ENCODE measurements at regions of chr3 and their contacts with region 1.

Region 1: GRCh38 chr3:4834403-4834866 is 144.8 kb upstream of the BHLHE40 start:
- DNase-seq: peak; percentile 72
- ATAC-seq: peak; percentile 57
- H3K4me3 Mint-ChIP-seq: peak overlapping the region; percentile 81
- H3K27ac Mint-ChIP-seq: peak overlapping the region; percentile 96
- H3K4me1 Mint-ChIP-seq: peaks cover 80% of the 10 kb centered on the region
- H3K27me3 Mint-ChIP-seq: no peaks in the 10 kb centered on the region

Region 2: DNA sequence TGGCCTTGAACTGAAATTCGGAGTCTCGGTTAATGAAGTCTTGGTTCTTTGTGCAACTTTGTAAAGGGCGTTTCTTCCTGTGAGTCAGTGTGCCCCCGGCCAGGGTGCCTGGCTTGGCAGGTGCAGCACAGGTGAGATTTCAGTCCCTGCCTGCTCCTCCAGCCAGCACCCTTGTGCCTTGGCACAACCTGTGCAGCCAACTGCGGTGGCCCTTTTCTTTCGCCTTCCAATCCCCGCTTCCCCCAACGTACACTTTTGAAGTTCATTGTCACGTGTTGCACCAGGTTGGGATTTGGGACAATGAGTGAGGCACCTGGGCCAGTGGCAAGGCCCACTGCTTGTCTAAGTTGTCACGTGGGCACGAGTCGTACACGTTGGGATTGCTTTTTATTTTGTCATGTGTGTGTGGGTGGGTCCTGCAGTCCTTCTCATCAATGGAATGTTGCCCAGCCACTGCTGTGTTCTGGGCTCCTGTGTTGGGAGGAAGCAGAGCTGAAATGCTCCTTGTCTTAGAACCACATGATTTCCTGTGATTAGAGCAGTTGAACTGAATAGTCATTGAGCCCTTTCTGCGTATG is 98.1 kb before region 1 on chr3:
- POLR2A ChIA-PET with region 1: interaction called, 26 read pairs
- DNase-seq: no peak
- ATAC-seq: peak; percentile 20
- H3K4me3 Mint-ChIP-seq: peak overlapping the region; percentile 66
- H3K27ac Mint-ChIP-seq: peak overlapping the region; percentile 97
- H3K4me1 Mint-ChIP-seq: peaks cover 78% of the 10 kb centered on the region
- H3K27me3 Mint-ChIP-seq: no peaks in the 10 kb centered on the region

Region 3: GRCh38 chr3:4814305-4814903 is 20.0 kb before region 1 on chr3:
- POLR2A ChIA-PET with region 1: no interaction called
- DNase-seq: no peak
- ATAC-seq: no peak
- H3K4me3 Mint-ChIP-seq: no peak overlapping the region
- H3K27ac Mint-ChIP-seq: no peak overlapping the region
- H3K4me1 Mint-ChIP-seq: peaks cover 9% of the 10 kb centered on the region
- H3K27me3 Mint-ChIP-seq: no peaks in the 10 kb centered on the region

Region 4: DNA sequence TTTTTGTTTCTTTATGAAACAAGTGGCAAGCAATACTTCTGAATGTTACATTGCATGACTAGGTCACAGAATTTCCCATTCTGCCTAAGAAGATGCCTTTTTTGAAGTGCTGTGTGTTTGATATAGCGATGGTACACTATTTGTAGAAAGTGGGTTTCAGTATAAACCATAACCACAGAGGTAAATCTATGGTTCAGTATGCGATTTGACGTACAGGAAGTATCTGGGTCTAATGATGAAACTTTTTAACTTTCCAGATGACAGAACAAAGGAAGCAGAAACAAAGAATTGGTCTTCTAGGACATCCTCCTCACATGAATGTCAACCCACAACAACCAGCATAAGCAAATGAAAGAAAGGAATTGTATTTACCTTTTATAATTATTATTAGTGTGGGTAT is 11.4 kb after region 1 on chr3:
- POLR2A ChIA-PET with region 1: interaction called, 111 read pairs
- DNase-seq: no peak
- ATAC-seq: peak; percentile 59
- H3K4me3 Mint-ChIP-seq: peak overlapping the region; percentile 59
- H3K27ac Mint-ChIP-seq: peak overlapping the region; percentile 90
- H3K4me1 Mint-ChIP-seq: peaks cover 84% of the 10 kb centered on the region
- H3K27me3 Mint-ChIP-seq: no peaks in the 10 kb centered on the region

Region 5: DNA sequence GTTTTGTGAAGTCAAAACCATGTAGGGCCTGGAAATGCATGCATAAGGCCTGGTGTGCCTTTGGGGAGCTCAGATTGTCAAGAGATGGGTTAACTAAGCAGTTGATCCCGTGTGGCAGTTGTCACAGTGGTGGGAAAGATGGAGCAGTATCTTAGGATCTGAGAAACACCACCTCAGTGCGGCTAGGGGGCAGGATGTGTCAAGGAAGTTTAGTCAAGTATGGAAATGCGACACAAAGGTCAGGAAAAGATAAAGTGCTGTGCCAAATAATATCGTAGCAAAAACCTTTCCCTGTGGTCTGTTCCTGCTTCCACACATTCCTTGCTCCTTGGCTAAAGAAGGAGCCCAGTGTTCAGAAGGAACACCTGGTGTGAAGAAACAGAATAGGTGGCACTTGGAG is 749.5 kb after region 1 on chr3:
- POLR2A ChIA-PET with region 1: no interaction called
- DNase-seq: no peak
- ATAC-seq: no peak
- H3K4me3 Mint-ChIP-seq: no peak overlapping the region
- H3K27ac Mint-ChIP-seq: no peak overlapping the region
- H3K4me1 Mint-ChIP-seq: no peaks in the 10 kb centered on the region
- H3K27me3 Mint-ChIP-seq: no peaks in the 10 kb centered on the region